ENCODE measurements at regions of chr17 and their contacts with region 1.

Region 1: DNA sequence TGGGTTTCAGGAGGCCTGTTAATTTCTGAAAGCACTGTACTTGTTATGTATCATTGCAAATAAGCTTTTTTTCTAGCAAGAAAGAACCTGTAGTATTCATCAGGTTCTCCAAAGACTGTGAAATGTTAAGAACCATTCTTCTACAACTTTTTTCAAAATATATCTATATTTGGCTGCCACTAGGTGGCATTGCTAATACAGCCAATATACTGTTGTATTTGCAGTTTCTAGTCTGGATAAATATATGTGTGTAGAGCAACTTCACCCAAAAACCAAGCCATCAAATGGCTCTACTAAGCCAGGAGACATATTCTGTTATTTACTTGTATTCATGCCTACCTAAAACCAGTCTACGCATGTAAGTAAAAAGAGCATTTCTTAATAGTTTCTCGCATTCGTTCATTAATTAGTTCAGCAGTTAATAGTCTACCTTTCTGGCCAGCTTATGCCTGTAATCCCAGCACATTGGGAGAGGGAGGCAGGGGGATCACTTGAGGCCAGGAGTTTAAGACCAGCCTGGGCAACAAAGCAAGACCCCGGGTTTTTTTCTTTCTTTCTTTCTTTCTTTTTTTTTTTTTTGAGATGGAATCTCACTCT is 39.5 kb downstream of the VMP1 start:
- DNase-seq: no peak
- ATAC-seq: peak; percentile 64
- H3K4me3 Mint-ChIP-seq: no peak overlapping the region
- H3K27ac Mint-ChIP-seq: no peak overlapping the region
- H3K4me1 Mint-ChIP-seq: peaks cover 22% of the 10 kb centered on the region
- H3K27me3 Mint-ChIP-seq: no peaks in the 10 kb centered on the region

Region 2: GRCh38 chr17:59666235-59666634 is 80.7 kb before region 1 on chr17:
- CTCF ChIA-PET with region 1: no interaction called
- POLR2A ChIA-PET with region 1: no interaction called
- intact Hi-C with region 1: no loop called
- DNase-seq: no peak
- ATAC-seq: no peak
- H3K4me3 Mint-ChIP-seq: no peak overlapping the region
- H3K27ac Mint-ChIP-seq: no peak overlapping the region
- H3K4me1 Mint-ChIP-seq: peaks cover 26% of the 10 kb centered on the region
- H3K27me3 Mint-ChIP-seq: no peaks in the 10 kb centered on the region

Region 3: GRCh38 chr17:59837308-59838051 is 90.5 kb after region 1 on chr17:
- CTCF ChIA-PET with region 1: interaction called, 113 read pairs
- POLR2A ChIA-PET with region 1: interaction called, 252 read pairs
- intact Hi-C with region 1: loop called in 1 of 2 experiments (anchors 2 kb)
- DNase-seq: peak; percentile 77
- ATAC-seq: peak; percentile 77
- H3K4me3 Mint-ChIP-seq: peak overlapping the region; percentile 100
- H3K27ac Mint-ChIP-seq: peak overlapping the region; percentile 100
- H3K4me1 Mint-ChIP-seq: peaks cover 41% of the 10 kb centered on the region
- H3K27me3 Mint-ChIP-seq: peaks cover 3% of the 10 kb centered on the region

Region 4: GRCh38 chr17:59859444-59860025 is 112.6 kb after region 1 on chr17:
- CTCF ChIA-PET with region 1: no interaction called
- POLR2A ChIA-PET with region 1: interaction called, 3 read pairs
- intact Hi-C with region 1: loop called in 1 of 2 experiments (anchors 1 kb)
- DNase-seq: no peak
- ATAC-seq: peak; percentile 60
- H3K4me3 Mint-ChIP-seq: no peak overlapping the region
- H3K27ac Mint-ChIP-seq: peak overlapping the region; percentile 37
- H3K4me1 Mint-ChIP-seq: peaks cover 20% of the 10 kb centered on the region
- H3K27me3 Mint-ChIP-seq: no peaks in the 10 kb centered on the region

Region 5: GRCh38 chr17:59964482-59965328 is 217.8 kb after region 1 on chr17 and contains the start of gene RNFT1:
- CTCF ChIA-PET with region 1: interaction called, 3 read pairs
- POLR2A ChIA-PET with region 1: no interaction called
- intact Hi-C with region 1: loop called in 1 of 2 experiments (anchors 5 kb)
- DNase-seq: peak; percentile 97
- ATAC-seq: peak; percentile 84
- H3K4me3 Mint-ChIP-seq: peak within 1 kb of the TSS; percentile 78
- H3K27ac Mint-ChIP-seq: peak within 1 kb of the TSS; percentile 96
- H3K4me1 Mint-ChIP-seq: peaks cover 19% of the 10 kb centered on the region
- H3K27me3 Mint-ChIP-seq: no peaks in the 10 kb centered on the region
- total RNA-seq, gene RNFT1: 32.8 to 36.9 TPM

Measured in activated CD4-positive, alpha-beta T cell treated with anti-CD3 and anti-CD28 coated beads for 36 hours (primary cell).